ENCODE measurements at regions of chr9 and their contacts with region 1.

Region 1: GRCh38 chr9:76987594-76988200 is 31.8 kb upstream of the FOXB2 start:
- DNase-seq: peak; percentile 67

Region 2: DNA sequence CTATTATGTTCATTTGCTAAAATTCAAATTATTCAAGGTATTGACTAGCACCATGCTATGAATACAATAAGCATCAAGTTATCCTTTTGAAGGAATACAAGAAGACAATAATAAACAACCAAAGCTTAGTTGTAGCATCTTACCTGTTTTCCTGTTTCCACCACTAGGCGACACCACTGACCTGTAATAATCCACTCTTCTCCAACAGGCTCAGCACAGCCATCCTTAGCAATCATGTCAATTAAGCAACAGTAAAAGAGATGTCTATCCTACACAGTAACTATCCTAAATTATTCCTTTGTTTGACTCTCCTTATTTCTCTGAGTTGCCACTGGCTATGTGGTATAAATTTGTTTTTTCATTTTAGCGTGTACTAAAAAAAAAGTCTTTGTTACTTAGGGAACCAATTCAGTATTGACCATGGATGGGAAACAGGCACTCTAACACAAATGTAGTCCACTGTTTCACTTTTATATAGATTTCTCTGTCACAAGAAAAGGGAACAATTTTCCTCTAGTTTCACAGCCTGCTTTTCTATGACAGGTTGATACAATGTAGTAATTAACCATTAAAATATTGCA is 177.2 kb before region 1 on chr9:
- in situ Hi-C with region 1: loop called (anchors 25 kb)
- DNase-seq: peak; percentile 54

Region 3: GRCh38 chr9:76846297-76846696 is 141.4 kb before region 1 on chr9:
- in situ Hi-C with region 1: no loop called
- DNase-seq: no peak

Measured in ACHN (cell line).